CD8-positive, alpha-beta T cell (primary cell): ENCODE measurements at regions of chr19 and their contacts with region 1.

Region 1: GRCh38 chr19:47256688-47257443 is 541 bp downstream of the CCDC9 start:
- DNase-seq: peak; percentile 96 to 100 (median 98)
- ATAC-seq: peak; percentile 80
- H3K4me3 ChIP-seq: peak overlapping the region; percentile 65 to 70
- H3K4me3 Mint-ChIP-seq: peak overlapping the region; percentile 92
- H3K27ac ChIP-seq: peak overlapping the region; percentile 76 to 98
- H3K27ac Mint-ChIP-seq: peak overlapping the region; percentile 97
- H3K4me1 ChIP-seq: peaks cover 23% of the 10 kb centered on the region
- H3K4me1 Mint-ChIP-seq: peaks cover 35% of the 10 kb centered on the region
- H3K27me3 ChIP-seq: no peaks in the 10 kb centered on the region
- H3K27me3 Mint-ChIP-seq: no peaks in the 10 kb centered on the region
- CTCF ChIP-seq: no peak

Region 2: GRCh38 chr19:45994989-45995714 is 1261.7 kb before region 1 on chr19 and contains the start of gene CCDC61:
- CTCF ChIA-PET with region 1: no interaction called
- POLR2A ChIA-PET with region 1: no interaction called
- intact Hi-C with region 1: loop called in 1 of 2 experiments (anchors 10 kb)
- DNase-seq: peak; percentile 92 to 99 (median 95)
- ATAC-seq: peak; percentile 95
- H3K4me3 ChIP-seq: peak within 1 kb of the TSS; percentile 73 to 77
- H3K4me3 Mint-ChIP-seq: no peak within 1 kb of the TSS
- H3K27ac ChIP-seq: peak within 1 kb of the TSS; percentile 64 to 74
- H3K27ac Mint-ChIP-seq: no peak within 1 kb of the TSS
- H3K4me1 ChIP-seq: peaks cover 16% of the 10 kb centered on the region
- H3K4me1 Mint-ChIP-seq: peaks cover 25% of the 10 kb centered on the region
- H3K27me3 ChIP-seq: no peaks in the 10 kb centered on the region
- H3K27me3 Mint-ChIP-seq: peaks cover 7% of the 10 kb centered on the region
- CTCF ChIP-seq: no peak
- total RNA-seq, gene CCDC61: 4.9 to 6.2 TPM

Region 3: DNA sequence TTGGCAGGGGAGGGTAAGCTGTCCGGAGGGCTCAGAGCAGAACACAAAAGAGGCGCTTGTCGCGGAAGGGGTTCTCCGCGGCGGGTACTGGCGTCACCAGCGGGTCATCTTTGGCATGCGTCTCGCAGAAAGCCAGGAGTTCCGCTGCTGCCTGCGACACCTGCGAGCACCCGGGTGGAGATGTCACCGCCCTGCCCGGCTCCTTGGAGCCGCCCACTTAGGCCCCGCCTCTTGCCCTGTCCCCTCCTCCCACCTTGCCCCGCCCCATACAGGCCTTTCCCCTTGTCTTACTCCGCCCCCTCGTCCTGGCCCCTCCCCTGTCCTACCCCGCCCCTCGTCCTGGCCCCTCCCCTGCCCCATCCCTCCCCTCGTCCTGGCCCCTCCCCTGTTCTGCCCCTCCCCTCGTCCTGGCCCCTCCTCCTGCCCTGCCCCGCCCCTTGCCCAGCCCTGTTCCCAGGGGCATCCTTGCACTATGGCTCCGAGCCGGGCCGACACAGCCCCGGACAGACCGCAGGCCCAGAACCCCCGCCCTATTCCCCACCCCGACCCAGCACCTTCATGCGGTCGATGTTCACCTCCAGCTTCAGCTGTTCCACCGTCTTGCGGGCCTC is 622.7 kb before region 1 on chr19:
- CTCF ChIA-PET with region 1: no interaction called
- POLR2A ChIA-PET with region 1: no interaction called
- intact Hi-C with region 1: loop called in 1 of 2 experiments (anchors 2 kb)
- DNase-seq: peak; percentile 86 to 96 (median 92)
- ATAC-seq: peak; percentile 83
- H3K4me3 ChIP-seq: peak overlapping the region; percentile 40 to 59
- H3K4me3 Mint-ChIP-seq: peak overlapping the region; percentile 80
- H3K27ac ChIP-seq: peak overlapping the region; percentile 35 to 48
- H3K27ac Mint-ChIP-seq: peak overlapping the region; percentile 90
- H3K4me1 ChIP-seq: peaks cover 36% of the 10 kb centered on the region
- H3K4me1 Mint-ChIP-seq: peaks cover 24% of the 10 kb centered on the region
- H3K27me3 ChIP-seq: peaks cover 0 to 24% of the 10 kb centered on the region in 2 experiments
- H3K27me3 Mint-ChIP-seq: no peaks in the 10 kb centered on the region
- CTCF ChIP-seq: no peak

Region 4: GRCh38 chr19:46850228-46851203 is 406.4 kb before region 1 on chr19 and contains the start of gene AP2S1:
- CTCF ChIA-PET with region 1: no interaction called
- POLR2A ChIA-PET with region 1: no interaction called
- intact Hi-C with region 1: loop called in 1 of 2 experiments (anchors 1 kb)
- DNase-seq: peak; percentile 83 to 97 (median 92)
- ATAC-seq: peak; percentile 95
- H3K4me3 ChIP-seq: peak within 1 kb of the TSS; percentile 68 to 88
- H3K4me3 Mint-ChIP-seq: peak within 1 kb of the TSS; percentile 93
- H3K27ac ChIP-seq: peak within 1 kb of the TSS; percentile 44 to 68
- H3K27ac Mint-ChIP-seq: peak within 1 kb of the TSS; percentile 89
- H3K4me1 ChIP-seq: peaks cover 12% of the 10 kb centered on the region
- H3K4me1 Mint-ChIP-seq: peaks cover 31% of the 10 kb centered on the region
- H3K27me3 ChIP-seq: no peaks in the 10 kb centered on the region
- H3K27me3 Mint-ChIP-seq: no peaks in the 10 kb centered on the region
- CTCF ChIP-seq: no peak
- total RNA-seq, gene AP2S1: 21.3 to 26.1 TPM

Region 5: DNA sequence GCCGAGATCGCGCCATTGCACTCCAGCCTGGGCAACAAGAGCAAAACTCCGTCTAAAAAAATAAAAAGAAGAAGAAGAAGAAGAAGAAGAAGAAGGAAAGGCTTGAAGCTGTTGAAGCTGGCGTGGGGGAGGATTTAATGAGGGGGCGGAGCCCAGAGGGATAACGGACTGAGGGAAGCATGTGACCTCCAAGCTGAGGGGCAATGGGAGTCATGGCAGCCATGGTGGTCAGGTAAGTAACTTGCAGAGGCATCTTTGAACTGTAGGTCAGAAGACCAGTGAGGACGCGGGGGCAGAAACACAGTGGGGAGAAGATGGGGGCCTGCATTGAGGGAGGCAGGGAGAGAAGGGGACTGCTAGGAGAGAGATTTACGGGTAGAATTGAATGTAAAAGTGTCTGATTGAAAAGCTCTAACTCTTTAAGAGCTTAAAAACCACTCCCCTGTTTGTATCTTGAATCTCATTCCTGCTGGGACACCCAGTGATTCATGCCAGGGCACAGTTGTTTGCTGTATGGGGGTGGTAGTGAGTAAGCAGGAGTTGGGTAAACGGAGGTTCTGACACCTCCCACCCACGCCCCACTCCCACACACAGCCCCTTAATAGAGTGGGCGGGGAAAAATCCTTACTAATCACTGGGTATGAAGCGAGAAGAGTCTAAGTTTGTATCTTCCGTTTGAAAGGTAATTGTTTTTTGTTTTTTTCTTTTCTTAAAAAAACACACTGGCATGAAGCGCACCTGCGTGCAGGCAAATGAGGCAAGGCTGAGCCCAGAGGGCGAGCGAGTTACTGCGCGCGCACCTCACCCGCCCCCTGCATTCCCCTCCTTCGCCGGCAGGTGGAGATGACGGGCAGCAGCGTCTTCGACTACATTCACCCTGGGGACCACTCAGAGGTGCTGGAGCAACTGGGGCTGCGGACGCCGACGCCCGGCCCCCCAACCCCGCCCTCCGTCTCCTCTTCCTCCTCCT is 221.5 kb before region 1 on chr19:
- CTCF ChIA-PET with region 1: interaction called, 3 read pairs
- POLR2A ChIA-PET with region 1: no interaction called
- intact Hi-C with region 1: loop called in 1 of 2 experiments (anchors 1 kb)
- DNase-seq: peak; percentile 90 to 99 (median 96)
- ATAC-seq: peak; percentile 98
- H3K4me3 ChIP-seq: peak overlapping the region; percentile 52 to 58
- H3K4me3 Mint-ChIP-seq: peak overlapping the region; percentile 88
- H3K27ac ChIP-seq: peak overlapping the region in 1 of 2 experiments; percentile 30
- H3K27ac Mint-ChIP-seq: peak overlapping the region; percentile 85
- H3K4me1 ChIP-seq: peaks cover 16% of the 10 kb centered on the region
- H3K4me1 Mint-ChIP-seq: peaks cover 17% of the 10 kb centered on the region
- H3K27me3 ChIP-seq: peaks cover 4 to 6% of the 10 kb centered on the region in 2 experiments
- H3K27me3 Mint-ChIP-seq: peaks cover 8% of the 10 kb centered on the region
- CTCF ChIP-seq: peak; percentile 99

Region 6: GRCh38 chr19:47058621-47059020 is 198.2 kb before region 1 on chr19:
- CTCF ChIA-PET with region 1: no interaction called
- POLR2A ChIA-PET with region 1: no interaction called
- intact Hi-C with region 1: no loop called
- DNase-seq: no peak
- ATAC-seq: no peak
- H3K4me3 ChIP-seq: no peak overlapping the region
- H3K4me3 Mint-ChIP-seq: no peak overlapping the region
- H3K27ac ChIP-seq: no peak overlapping the region
- H3K27ac Mint-ChIP-seq: no peak overlapping the region
- H3K4me1 ChIP-seq: no peaks in the 10 kb centered on the region
- H3K4me1 Mint-ChIP-seq: no peaks in the 10 kb centered on the region
- H3K27me3 ChIP-seq: no peaks in the 10 kb centered on the region
- H3K27me3 Mint-ChIP-seq: no peaks in the 10 kb centered on the region
- CTCF ChIP-seq: no peak

Region 7: DNA sequence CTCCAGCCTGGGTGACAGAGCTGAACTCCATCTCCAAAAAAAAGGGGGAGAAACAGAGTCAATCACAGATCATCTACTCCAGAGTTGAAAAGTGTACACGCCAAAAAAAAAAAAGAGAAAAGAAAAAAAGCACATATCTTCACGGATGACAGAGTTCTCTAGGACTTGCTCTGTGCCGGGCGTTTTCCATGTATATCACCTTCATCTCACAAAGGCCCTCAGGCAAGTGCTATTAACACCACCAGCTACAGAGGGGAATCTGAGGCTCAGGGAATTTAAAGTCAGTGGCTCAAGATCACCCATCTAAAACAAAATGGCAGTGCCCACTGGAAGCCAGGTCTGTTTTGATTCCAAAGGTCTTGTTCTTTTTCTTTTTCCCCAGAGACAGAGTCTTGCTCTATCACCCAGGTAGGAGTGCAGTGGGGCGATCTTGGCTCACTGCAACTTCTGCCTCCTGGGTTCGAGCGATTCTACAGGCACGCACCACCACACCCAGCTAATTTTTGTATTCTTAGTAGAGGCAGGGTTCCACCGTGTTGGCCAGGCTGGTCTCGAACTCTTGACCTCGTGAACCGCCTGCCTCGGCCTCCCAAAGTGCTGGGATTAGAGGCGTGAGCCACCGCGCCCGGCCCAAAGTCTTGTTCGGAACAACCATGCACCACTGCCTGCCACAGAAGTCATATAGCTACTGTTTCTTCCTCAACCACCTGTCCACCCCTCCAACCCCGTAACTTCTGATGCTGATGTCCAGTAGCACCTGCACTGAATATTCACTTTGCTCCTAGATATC is 84.0 kb before region 1 on chr19:
- CTCF ChIA-PET with region 1: no interaction called
- POLR2A ChIA-PET with region 1: no interaction called
- intact Hi-C with region 1: no loop called
- DNase-seq: no peak
- ATAC-seq: no peak
- H3K4me3 ChIP-seq: no peak overlapping the region
- H3K4me3 Mint-ChIP-seq: no peak overlapping the region
- H3K27ac ChIP-seq: no peak overlapping the region
- H3K27ac Mint-ChIP-seq: no peak overlapping the region
- H3K4me1 ChIP-seq: peaks cover 30% of the 10 kb centered on the region
- H3K4me1 Mint-ChIP-seq: peaks cover 54% of the 10 kb centered on the region
- H3K27me3 ChIP-seq: no peaks in the 10 kb centered on the region
- H3K27me3 Mint-ChIP-seq: no peaks in the 10 kb centered on the region
- CTCF ChIP-seq: no peak

Region 8: GRCh38 chr19:47195434-47195833 is 61.4 kb before region 1 on chr19:
- CTCF ChIA-PET with region 1: no interaction called
- POLR2A ChIA-PET with region 1: no interaction called
- intact Hi-C with region 1: no loop called
- DNase-seq: no peak
- ATAC-seq: no peak
- H3K4me3 ChIP-seq: no peak overlapping the region
- H3K4me3 Mint-ChIP-seq: no peak overlapping the region
- H3K27ac ChIP-seq: no peak overlapping the region
- H3K27ac Mint-ChIP-seq: no peak overlapping the region
- H3K4me1 ChIP-seq: peaks cover 22% of the 10 kb centered on the region
- H3K4me1 Mint-ChIP-seq: peaks cover 24% of the 10 kb centered on the region
- H3K27me3 ChIP-seq: no peaks in the 10 kb centered on the region
- H3K27me3 Mint-ChIP-seq: no peaks in the 10 kb centered on the region
- CTCF ChIP-seq: no peak

Region 9: GRCh38 chr19:47225746-47226425 is 31.0 kb before region 1 on chr19:
- CTCF ChIA-PET with region 1: no interaction called
- POLR2A ChIA-PET with region 1: interaction called, 15 read pairs
- intact Hi-C with region 1: loop called (anchors 1 kb)
- DNase-seq: peak; percentile 80 to 95 (median 86)
- ATAC-seq: peak; percentile 47
- H3K4me3 ChIP-seq: peak overlapping the region; percentile 48 to 68
- H3K4me3 Mint-ChIP-seq: peak overlapping the region; percentile 81
- H3K27ac ChIP-seq: peak overlapping the region; percentile 73 to 89
- H3K27ac Mint-ChIP-seq: peak overlapping the region; percentile 92
- H3K4me1 ChIP-seq: peaks cover 40% of the 10 kb centered on the region
- H3K4me1 Mint-ChIP-seq: peaks cover 16% of the 10 kb centered on the region
- H3K27me3 ChIP-seq: no peaks in the 10 kb centered on the region
- H3K27me3 Mint-ChIP-seq: no peaks in the 10 kb centered on the region
- CTCF ChIP-seq: peak; percentile 51

Region 10: DNA sequence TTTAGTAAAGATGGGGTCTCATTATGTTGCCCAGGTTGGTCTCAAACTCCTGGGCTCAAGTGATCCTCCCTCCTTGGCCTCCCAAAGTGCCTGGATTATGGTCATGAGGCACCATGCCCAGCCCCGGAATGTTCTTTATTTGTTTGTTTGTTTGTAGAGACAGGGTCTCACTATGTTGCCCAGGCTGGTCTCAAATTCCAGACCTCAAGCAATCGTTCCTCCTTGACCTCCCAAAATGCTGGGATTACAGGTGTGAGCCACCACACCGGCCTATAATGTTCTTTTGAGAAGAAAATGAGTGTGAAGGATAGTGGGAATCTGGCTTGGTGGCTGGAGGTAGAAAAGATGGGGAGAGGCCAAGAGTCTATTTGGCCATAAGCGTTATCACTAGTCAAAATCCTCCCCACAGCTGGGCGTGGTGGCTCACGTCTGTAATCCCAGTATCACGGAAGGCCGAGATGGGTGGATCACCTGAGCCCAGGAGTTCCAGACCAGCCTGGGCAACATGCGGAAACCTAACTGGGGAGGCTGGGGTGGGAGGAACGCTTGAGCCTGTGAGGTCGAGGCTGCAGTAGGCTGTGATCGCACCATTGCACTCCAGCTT is 20.7 kb before region 1 on chr19:
- CTCF ChIA-PET with region 1: no interaction called
- POLR2A ChIA-PET with region 1: no interaction called
- intact Hi-C with region 1: no loop called
- DNase-seq: no peak
- ATAC-seq: no peak
- H3K4me3 ChIP-seq: no peak overlapping the region
- H3K4me3 Mint-ChIP-seq: no peak overlapping the region
- H3K27ac ChIP-seq: no peak overlapping the region
- H3K27ac Mint-ChIP-seq: no peak overlapping the region
- H3K4me1 ChIP-seq: peaks cover 30% of the 10 kb centered on the region
- H3K4me1 Mint-ChIP-seq: peaks cover 34% of the 10 kb centered on the region
- H3K27me3 ChIP-seq: no peaks in the 10 kb centered on the region
- H3K27me3 Mint-ChIP-seq: no peaks in the 10 kb centered on the region
- CTCF ChIP-seq: no peak

Region 11: DNA sequence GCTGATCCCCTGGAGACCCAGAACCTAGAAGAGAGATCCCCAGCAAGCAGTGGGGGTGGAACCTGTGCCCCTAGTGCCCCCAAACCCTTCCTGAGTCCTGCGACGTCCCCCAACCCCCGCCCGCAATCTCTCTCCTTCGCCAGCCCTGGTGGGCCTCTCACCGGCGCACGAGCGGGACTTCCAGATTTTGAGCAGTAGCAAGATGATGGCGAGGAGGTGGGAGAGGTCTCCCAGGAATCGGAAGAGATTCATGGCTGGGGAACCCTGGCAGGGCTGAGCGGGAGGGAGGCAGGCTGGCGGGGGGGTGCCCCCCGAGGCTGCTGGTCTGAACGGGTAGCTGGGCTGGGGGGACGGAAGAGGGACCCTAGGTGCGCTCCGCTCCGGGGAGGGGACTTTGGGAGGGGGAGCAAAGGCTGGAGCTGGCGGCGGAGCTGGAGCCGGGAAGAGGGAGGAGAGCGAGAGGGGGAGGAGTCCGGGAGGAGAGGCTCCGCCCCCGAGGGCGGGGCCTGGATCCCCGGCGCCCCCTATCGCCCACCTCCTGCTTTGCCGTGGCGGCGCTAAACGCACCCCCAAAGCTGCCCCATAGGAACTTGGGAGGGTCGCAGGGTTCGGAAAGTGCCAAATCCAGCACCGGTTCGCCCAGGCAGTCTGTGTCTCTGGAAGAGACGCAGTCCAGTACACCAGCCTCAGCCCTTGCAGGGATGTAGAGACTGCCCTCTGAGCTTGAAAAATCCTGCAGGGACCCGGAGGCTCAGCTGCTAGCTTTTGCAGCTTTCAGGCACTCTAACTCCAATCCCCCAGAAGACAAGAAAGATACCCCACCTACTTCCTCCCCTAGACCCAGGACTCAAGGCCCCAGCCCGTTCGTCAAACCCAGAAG is 1134.5 kb after region 1 on chr19 and contains the start of gene KDELR1:
- CTCF ChIA-PET with region 1: no interaction called
- POLR2A ChIA-PET with region 1: no interaction called
- intact Hi-C with region 1: loop called in 1 of 2 experiments (anchors 10 kb)
- DNase-seq: peak; percentile 53 to 86 (median 76)
- ATAC-seq: peak; percentile 85
- H3K4me3 ChIP-seq: peak within 1 kb of the TSS; percentile 75 to 81
- H3K4me3 Mint-ChIP-seq: peak within 1 kb of the TSS; percentile 92
- H3K27ac ChIP-seq: peak within 1 kb of the TSS; percentile 87 to 92
- H3K27ac Mint-ChIP-seq: peak within 1 kb of the TSS; percentile 95
- H3K4me1 ChIP-seq: peaks cover 37% of the 10 kb centered on the region
- H3K4me1 Mint-ChIP-seq: peaks cover 39% of the 10 kb centered on the region
- H3K27me3 ChIP-seq: peaks cover 24 to 31% of the 10 kb centered on the region in 2 experiments
- H3K27me3 Mint-ChIP-seq: peaks cover 15% of the 10 kb centered on the region
- CTCF ChIP-seq: peak; percentile 96
- total RNA-seq, gene KDELR1: 29.7 to 33.1 TPM